BJ (cell line): ENCODE measurements at regions of chr15 and their contacts with region 1.

Region 1: GRCh38 chr15:23035964-23036566 is 3.3 kb downstream of the TUBGCP5 start:
- DNase-seq: no peak
- H3K4me3 ChIP-seq: no peak overlapping the region
- H3K27me3 ChIP-seq: no peaks in the 10 kb centered on the region
- CTCF ChIP-seq: peak; percentile 81

Region 2: DNA sequence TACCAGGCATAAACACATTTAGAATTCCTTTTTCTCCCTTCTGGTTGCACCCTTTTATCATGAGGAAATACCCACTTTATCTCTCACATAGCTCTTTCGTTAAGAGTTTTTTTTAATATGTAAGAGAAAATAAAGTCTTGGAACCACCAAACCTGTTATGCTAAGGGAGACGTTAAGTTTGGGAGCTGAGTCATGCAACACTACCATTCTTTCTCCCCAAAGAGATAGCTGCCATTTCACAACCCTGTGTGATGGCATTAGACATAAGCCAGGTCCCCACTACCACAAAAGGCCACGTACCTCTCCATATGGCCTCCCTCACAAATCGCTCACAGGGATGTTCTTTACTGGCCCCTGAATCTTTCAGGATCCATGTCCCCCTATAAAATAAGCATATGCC is 257.3 kb before region 1 on chr15:
- CTCF ChIA-PET with region 1: no interaction called
- POLR2A ChIA-PET with region 1: no interaction called
- DNase-seq: no peak
- H3K4me3 ChIP-seq: no peak overlapping the region
- H3K27me3 ChIP-seq: no peaks in the 10 kb centered on the region
- CTCF ChIP-seq: no peak

Region 3: GRCh38 chr15:23022156-23022555 is 13.9 kb before region 1 on chr15:
- CTCF ChIA-PET with region 1: interaction called, 22 read pairs
- POLR2A ChIA-PET with region 1: no interaction called
- DNase-seq: no peak
- H3K4me3 ChIP-seq: no peak overlapping the region
- H3K27me3 ChIP-seq: no peaks in the 10 kb centered on the region
- CTCF ChIP-seq: no peak